ENCODE measurements at regions of chr3 and their contacts with region 1.

Region 1: DNA sequence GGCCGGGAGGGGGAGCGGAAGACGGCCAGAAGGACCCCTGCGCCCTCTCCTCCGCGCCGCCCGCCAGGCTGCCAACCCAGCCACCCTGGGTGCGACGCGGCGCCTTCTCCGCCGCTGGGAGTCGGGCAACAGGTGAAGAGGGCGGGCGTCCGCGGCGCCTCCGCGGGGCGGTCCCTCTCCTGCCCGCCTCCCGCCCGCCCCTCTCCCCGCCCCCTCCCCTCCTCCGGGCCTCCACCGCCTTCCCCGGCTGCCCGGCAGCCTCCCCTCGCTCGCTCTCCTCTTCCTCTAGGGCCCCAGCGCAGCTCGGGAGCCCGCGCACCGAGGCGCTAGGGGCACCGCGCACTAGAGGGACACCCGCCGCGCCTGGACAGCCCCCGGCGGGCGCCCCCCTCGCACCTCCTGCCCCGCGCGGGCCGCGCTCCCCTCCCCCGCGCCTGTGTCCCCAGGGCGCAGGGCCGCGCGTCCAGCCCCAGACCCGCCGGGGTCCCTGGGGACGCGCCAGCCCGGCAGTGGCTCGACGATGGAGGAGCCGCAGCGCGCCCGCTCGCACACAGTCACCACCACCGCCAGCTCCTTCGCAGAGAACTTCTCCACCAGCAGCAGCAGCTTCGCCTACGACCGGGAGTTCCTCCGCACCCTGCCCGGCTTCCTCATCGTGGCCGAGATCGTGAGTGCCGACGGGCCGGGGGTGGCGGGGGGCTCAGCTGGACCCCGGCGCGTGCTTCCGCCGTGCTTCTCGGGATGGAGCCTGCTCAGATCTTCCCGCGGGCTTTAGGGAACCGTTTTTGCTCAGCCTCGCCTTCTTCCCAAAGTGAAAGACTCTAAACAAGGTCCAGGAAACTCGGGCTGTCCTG is at the start of gene CMTM8:
- DNase-seq: peak; percentile 67
- H3K4me3 Mint-ChIP-seq: peak within 1 kb of the TSS; percentile 73
- H3K27ac Mint-ChIP-seq: peak within 1 kb of the TSS; percentile 34
- H3K4me1 Mint-ChIP-seq: peaks cover 29% of the 10 kb centered on the region
- H3K27me3 Mint-ChIP-seq: peaks cover 24% of the 10 kb centered on the region
- total RNA-seq, gene CMTM8: 5.9 to 6.5 TPM

Region 2: DNA sequence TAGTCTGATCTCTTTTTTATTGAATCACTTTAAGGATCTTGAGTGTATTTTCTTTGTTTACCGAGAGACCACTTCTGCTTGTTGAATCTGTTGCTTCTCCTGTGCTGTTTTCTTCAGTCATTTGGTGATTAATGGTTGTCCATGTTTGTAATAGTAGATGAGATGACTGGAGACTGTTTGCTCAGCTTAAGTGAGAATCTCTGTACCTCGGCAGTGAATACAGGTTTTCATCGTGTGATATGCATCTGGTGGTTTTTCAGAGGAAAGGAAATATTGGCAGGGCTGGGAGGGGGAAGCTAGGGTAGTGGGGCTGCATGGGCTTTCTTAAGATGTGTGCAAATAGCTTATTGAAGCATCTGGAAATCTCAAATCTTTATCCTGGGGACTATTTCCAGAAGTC is 19.0 kb after region 1 on chr3:
- CTCF ChIA-PET with region 1: interaction called, 10 read pairs
- POLR2A ChIA-PET with region 1: no interaction called
- DNase-seq: no peak
- H3K4me3 Mint-ChIP-seq: no peak overlapping the region
- H3K27ac Mint-ChIP-seq: no peak overlapping the region
- H3K4me1 Mint-ChIP-seq: peaks cover 17% of the 10 kb centered on the region
- H3K27me3 Mint-ChIP-seq: no peaks in the 10 kb centered on the region

Region 3: DNA sequence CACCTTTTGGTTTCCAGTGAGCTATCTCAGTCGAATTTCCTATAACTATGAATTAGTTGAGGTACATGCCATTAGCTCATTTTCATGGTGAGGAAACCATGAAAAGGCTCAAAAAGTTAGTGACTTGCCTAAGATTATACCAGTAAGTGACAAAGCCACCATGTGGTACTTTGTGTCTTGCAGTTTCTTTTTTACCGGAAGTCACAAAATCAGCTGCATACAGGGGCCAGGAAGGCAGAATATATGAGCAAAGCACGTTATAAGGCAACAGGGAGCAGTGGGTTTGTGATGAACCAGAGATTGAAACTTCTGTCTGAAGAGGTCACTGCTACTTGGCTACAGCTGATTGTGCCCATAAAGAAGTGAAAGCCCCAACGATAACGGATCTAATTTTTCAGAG is 50.1 kb after region 1 on chr3:
- CTCF ChIA-PET with region 1: interaction called, 12 read pairs
- POLR2A ChIA-PET with region 1: no interaction called
- DNase-seq: peak; percentile 50
- H3K4me3 Mint-ChIP-seq: no peak overlapping the region
- H3K27ac Mint-ChIP-seq: peak overlapping the region; percentile 83
- H3K4me1 Mint-ChIP-seq: peaks cover 35% of the 10 kb centered on the region
- H3K27me3 Mint-ChIP-seq: no peaks in the 10 kb centered on the region

Measured in activated CD4-positive, alpha-beta T cell treated with anti-CD3 and anti-CD28 coated beads, Interleukin-2, amount 10 ng/mL, durations not matched to agents 7 days and 5 days (primary cell).